PC-3 (cell line): ENCODE measurements at regions of chr1 and their contacts with region 1.

Region 1: GRCh38 chr1:147781056-147781471 is 20.7 kb upstream of the GJA5 start:
- DNase-seq: peak; percentile 95
- ATAC-seq: peak; percentile 97
- H3K4me3 ChIP-seq: no peak overlapping the region
- H3K27ac ChIP-seq: 0 out of 2 replicates have a peak overlapping the region, but pooled peaks have one; percentile 18
- H3K4me1 ChIP-seq: peaks cover 16% of the 10 kb centered on the region
- H3K27me3 ChIP-seq: no peaks in the 10 kb centered on the region
- CTCF ChIP-seq: no peak

Region 2: GRCh38 chr1:147800804-147801203 is 19.7 kb after region 1 on chr1:
- CTCF ChIA-PET with region 1: no interaction called
- POLR2A ChIA-PET with region 1: no interaction called
- intact Hi-C with region 1: loop called (anchors 1 kb)
- DNase-seq: peak; percentile 56
- ATAC-seq: peak; percentile 61
- H3K4me3 ChIP-seq: no peak overlapping the region
- H3K27ac ChIP-seq: no peak overlapping the region
- H3K4me1 ChIP-seq: peaks cover 8% of the 10 kb centered on the region; the same call in 1 of the 2 replicates
- H3K27me3 ChIP-seq: no peaks in the 10 kb centered on the region
- CTCF ChIP-seq: no peak

Region 3: DNA sequence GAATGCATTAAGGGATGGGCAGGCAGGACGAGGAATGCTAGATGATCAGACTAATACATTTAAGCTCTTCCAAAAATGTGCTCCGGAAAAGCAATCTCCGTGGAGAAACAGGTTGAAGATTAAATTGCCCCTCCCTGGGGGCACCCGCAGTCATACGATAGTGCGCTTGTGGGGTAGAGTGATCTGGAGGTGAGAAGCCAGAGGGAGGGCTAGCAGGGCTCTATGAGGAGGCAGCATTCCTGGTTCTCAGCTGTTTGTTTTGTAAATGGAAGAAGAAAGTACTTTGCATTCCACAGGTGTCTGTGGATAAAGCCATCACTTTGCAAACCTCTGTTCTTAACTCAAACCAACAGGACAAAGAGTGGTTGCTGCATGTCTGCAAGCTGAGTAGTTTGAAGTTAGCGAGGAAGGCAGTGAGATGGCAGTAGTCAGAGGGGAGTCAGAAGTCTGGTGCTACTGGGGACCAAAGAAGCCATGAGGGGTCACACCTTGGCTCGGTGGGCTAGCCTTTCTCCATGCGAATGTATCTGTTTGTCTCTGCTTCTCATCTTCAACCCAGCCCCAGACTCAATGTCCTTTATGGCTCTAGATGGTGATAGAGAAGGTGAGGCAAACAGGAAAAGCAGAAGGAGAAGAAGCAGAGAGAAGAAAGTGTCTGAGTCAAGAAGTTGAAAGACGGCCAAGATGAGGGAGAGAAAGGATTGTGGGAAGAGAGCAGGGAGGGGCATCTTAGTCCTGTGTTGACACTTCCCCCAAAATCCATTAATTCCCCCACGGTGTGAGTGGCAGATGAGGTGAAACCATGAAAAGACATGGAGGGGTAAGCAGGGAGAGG is 56.3 kb after region 1 on chr1:
- CTCF ChIA-PET with region 1: no interaction called
- POLR2A ChIA-PET with region 1: no interaction called
- intact Hi-C with region 1: loop called (anchors 10 kb)
- DNase-seq: no peak
- ATAC-seq: no peak
- H3K4me3 ChIP-seq: no peak overlapping the region
- H3K27ac ChIP-seq: no peak overlapping the region
- H3K4me1 ChIP-seq: peaks cover 16% of the 10 kb centered on the region
- H3K27me3 ChIP-seq: no peaks in the 10 kb centered on the region
- CTCF ChIP-seq: no peak